ENCODE measurements at regions of chr4 and their contacts with region 1.

Region 1: GRCh38 chr4:80007745-80008149 is 65.3 kb downstream of the ANTXR2 start:
- DNase-seq: no peak
- H3K4me3 Mint-ChIP-seq: peak overlapping the region; percentile 41
- H3K27ac Mint-ChIP-seq: peak overlapping the region; percentile 88
- H3K4me1 Mint-ChIP-seq: peaks cover 74% of the 10 kb centered on the region
- H3K27me3 Mint-ChIP-seq: no peaks in the 10 kb centered on the region

Region 2: GRCh38 chr4:79987401-79987800 is 20.3 kb before region 1 on chr4:
- intact Hi-C with region 1: loop called (anchors 1 kb)
- DNase-seq: no peak
- H3K4me3 Mint-ChIP-seq: no peak overlapping the region
- H3K27ac Mint-ChIP-seq: no peak overlapping the region
- H3K4me1 Mint-ChIP-seq: peaks cover 27% of the 10 kb centered on the region
- H3K27me3 Mint-ChIP-seq: no peaks in the 10 kb centered on the region

Measured in activated T-helper 1 cell treated with anti-CD3 and anti-CD28 coated beads, Interleukin-12 subunit alpha, Interleukin-12 subunit beta, Interleukin-2, Interleukin-4 antibody, amounts not matched to agents 30 ng/mL and 10 ng/mL and 1 ng/mL, durations not matched to agents 14 hours and 24 hours and 36 hours (primary cell).